Breast epithelium (tissue), 4 donors: ENCODE measurements at regions of chr5 and their contacts with region 1.

Region 1: DNA sequence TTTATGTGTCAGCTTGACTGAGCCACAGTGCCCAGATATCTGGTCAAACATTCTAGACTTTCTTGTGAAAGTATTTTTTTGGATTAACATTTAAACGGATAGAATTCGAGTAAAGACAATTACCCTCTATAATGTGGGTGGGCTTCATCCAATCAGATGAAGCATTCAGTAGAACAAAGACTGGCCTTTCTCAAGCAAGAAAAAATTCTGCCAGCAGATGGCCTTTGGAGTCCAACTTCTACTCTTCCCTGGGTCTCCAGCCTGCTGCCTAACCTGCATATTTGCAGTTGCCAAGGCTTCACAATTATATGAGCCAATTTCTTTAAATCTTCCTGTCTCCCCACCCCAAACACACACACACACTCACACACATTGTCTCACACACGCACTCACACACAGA is 86.4 kb downstream of the MED10 start:
- DNase-seq: no peak
- H3K4me3 ChIP-seq: no peak overlapping the region
- H3K27ac ChIP-seq: no peak overlapping the region
- H3K4me1 ChIP-seq: no peaks in the 10 kb centered on the region
- H3K27me3 ChIP-seq: no peaks in the 10 kb centered on the region
- CTCF ChIP-seq: no peak
- POLR2A ChIP-seq: no peak

Region 2: GRCh38 chr5:6644662-6645275 is 352.8 kb after region 1 on chr5:
- intact Hi-C with region 1: loop called (anchors 5 kb)
- DNase-seq: no peak
- H3K4me3 ChIP-seq: no peak overlapping the region
- H3K27ac ChIP-seq: no peak overlapping the region
- H3K4me1 ChIP-seq: no peaks in the 10 kb centered on the region
- H3K27me3 ChIP-seq: no peaks in the 10 kb centered on the region
- CTCF ChIP-seq: no peak
- POLR2A ChIP-seq: no peak

Region 3: DNA sequence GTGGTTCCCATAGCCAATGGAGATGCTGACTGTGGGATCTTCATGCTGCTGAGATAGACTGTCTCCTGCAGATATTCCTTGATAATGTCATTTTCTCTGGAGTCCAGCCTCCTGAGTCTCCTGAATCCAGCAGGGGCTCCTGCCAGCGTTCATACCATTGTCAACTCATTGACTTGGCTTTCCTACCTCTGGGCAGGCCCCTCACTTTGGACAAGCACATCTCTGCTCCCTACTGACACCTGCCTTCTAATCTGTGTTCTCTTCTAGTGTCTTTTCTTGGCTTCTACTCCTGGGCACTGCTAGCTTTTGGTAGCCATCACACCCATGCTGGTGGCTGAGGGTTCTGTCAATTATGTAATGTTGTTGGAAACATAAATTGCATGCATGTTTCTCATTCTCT is 1242.0 kb after region 1 on chr5:
- intact Hi-C with region 1: no loop called
- DNase-seq: no peak
- H3K4me3 ChIP-seq: no peak overlapping the region
- H3K27ac ChIP-seq: no peak overlapping the region
- H3K4me1 ChIP-seq: no peaks in the 10 kb centered on the region
- H3K27me3 ChIP-seq: no peaks in the 10 kb centered on the region
- CTCF ChIP-seq: no peak
- POLR2A ChIP-seq: no peak

Region 4: GRCh38 chr5:8135742-8136141 is 1843.8 kb after region 1 on chr5:
- intact Hi-C with region 1: loop called (anchors 10 kb)
- DNase-seq: no peak
- H3K4me3 ChIP-seq: no peak overlapping the region
- H3K27ac ChIP-seq: no peak overlapping the region
- H3K4me1 ChIP-seq: no peaks in the 10 kb centered on the region
- H3K27me3 ChIP-seq: no peaks in the 10 kb centered on the region
- CTCF ChIP-seq: no peak
- POLR2A ChIP-seq: no peak